Gastrocnemius medialis (tissue), 4 donors: ENCODE measurements at regions of chr17 and their contacts with region 1.

Region 1: GRCh38 chr17:47615766-47616424 is 33.8 kb upstream of the KPNB1 start:
- DNase-seq: no peak
- ATAC-seq: peak in 1 of 2 donors; percentile 52
- H3K4me3 ChIP-seq: no peak overlapping the region
- H3K27ac ChIP-seq: peak overlapping the region in 2 of 4 donors; percentile 26 to 32
- H3K4me1 ChIP-seq: peaks cover 12 to 19% of the 10 kb centered on the region in 2 donors
- H3K27me3 ChIP-seq: no peaks in the 10 kb centered on the region
- CTCF ChIP-seq: peak; percentile 73 to 79 (median 75)
- POLR2A ChIP-seq: no peak

Region 2: GRCh38 chr17:47131761-47132160 is 484.1 kb before region 1 on chr17:
- in situ Hi-C with region 1: loop called in 1 of 4 experiments (anchors 25 kb)
- intact Hi-C with region 1: no loop called
- DNase-seq: no peak
- ATAC-seq: no peak
- H3K4me3 ChIP-seq: no peak overlapping the region
- H3K27ac ChIP-seq: no peak overlapping the region
- H3K4me1 ChIP-seq: no peaks in the 10 kb centered on the region
- H3K27me3 ChIP-seq: no peaks in the 10 kb centered on the region
- CTCF ChIP-seq: no peak
- POLR2A ChIP-seq: no peak

Region 3: DNA sequence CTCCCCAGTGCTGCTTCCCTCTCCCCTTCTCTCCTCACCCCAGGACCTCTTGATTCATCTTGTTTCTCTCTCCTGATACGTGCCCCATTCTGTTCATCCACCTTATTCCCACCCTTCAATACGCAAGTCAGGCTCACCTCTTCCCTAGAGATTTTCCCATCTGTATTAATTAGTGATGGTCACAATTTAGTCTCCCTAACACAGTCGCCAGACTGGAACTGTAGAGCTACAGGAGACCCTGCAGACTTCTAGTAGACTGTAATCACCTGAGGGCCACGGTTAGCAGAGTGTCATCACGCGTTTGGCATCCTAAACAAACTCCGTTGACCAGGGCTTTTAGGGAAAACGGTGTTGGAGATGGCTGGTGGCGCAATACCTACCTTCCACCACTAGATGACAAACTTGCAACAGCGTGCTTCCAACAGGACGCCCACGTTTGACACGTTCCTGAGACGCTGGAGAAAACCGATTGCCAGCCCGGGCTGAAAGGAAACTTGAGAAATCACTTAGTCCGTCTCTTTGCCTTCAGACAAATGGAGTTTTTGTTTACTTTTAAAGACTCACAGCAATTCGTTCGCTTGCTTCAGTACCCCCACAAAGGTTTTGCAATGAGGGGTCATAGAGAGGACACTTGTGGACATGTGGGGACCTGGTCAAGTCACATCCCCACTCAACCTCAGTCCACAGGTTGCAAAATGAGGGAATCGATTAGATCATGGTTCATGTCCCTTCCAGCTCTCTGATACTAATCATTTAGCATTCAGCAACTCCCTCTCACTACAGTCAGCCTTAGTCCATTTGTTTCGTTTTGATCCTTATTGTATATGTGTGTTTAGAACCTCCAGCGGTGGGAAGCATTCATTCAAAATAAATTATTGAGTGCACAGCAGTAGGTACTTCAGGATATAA is 386.1 kb before region 1 on chr17:
- in situ Hi-C with region 1: loop called in 1 of 4 experiments (anchors 10 kb)
- intact Hi-C with region 1: no loop called
- DNase-seq: peak; percentile 71 to 77
- ATAC-seq: peak; percentile 89
- H3K4me3 ChIP-seq: peak overlapping the region; percentile 8 to 39 (median 26)
- H3K27ac ChIP-seq: peak overlapping the region in 2 of 4 donors; percentile 39 to 42
- H3K4me1 ChIP-seq: peaks cover 11 to 13% of the 10 kb centered on the region in 2 donors
- H3K27me3 ChIP-seq: no peaks in the 10 kb centered on the region
- CTCF ChIP-seq: peak; percentile 92 to 98 (median 97)
- POLR2A ChIP-seq: no peak

Region 4: DNA sequence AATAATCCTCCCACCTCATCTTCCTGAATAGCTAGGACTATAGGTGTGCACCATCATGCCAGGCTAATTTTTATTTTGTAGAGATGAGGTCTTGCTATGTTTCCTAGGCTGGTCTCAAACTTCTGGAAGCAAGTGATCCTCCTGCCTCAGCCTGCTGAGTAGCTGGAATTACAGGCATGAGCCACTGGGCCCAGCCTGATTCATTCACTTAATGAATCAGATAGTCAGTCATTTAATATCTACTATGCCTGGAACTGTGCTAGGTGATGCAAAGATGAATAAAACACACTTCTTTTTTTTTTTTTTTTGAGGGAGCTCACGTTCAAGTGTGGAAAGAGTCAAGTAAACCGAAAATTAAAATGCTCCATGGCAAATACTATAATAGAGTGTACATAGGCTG is 252.7 kb before region 1 on chr17:
- in situ Hi-C with region 1: no loop called
- intact Hi-C with region 1: loop called (anchors 5 kb)
- DNase-seq: no peak
- ATAC-seq: no peak
- H3K4me3 ChIP-seq: no peak overlapping the region
- H3K27ac ChIP-seq: no peak overlapping the region
- H3K4me1 ChIP-seq: no peaks in the 10 kb centered on the region
- H3K27me3 ChIP-seq: no peaks in the 10 kb centered on the region
- CTCF ChIP-seq: no peak
- POLR2A ChIP-seq: no peak

Region 5: DNA sequence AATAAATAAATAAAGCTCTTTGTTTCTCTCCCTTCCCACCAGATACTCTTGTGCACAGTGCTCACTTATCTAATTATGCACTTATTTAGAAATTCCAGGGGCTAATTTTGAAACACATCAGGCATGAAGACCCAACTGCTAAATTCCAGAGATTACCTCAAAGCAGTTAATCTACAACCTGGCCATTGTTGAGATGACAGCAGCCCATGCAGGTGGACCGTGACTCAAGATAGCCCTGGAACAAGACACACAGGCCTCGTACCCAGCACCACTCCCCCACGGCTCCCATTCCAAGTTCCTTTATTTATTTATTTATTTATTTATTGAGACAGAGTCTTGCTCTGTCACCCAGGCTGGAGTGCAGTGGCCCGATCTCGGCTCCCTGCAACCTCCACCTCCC is 145.1 kb before region 1 on chr17:
- in situ Hi-C with region 1: loop called in 1 of 4 experiments (anchors 25 kb)
- intact Hi-C with region 1: no loop called
- DNase-seq: no peak
- ATAC-seq: no peak
- H3K4me3 ChIP-seq: no peak overlapping the region
- H3K27ac ChIP-seq: no peak overlapping the region
- H3K4me1 ChIP-seq: no peaks in the 10 kb centered on the region
- H3K27me3 ChIP-seq: no peaks in the 10 kb centered on the region
- CTCF ChIP-seq: no peak
- POLR2A ChIP-seq: no peak

Region 6: DNA sequence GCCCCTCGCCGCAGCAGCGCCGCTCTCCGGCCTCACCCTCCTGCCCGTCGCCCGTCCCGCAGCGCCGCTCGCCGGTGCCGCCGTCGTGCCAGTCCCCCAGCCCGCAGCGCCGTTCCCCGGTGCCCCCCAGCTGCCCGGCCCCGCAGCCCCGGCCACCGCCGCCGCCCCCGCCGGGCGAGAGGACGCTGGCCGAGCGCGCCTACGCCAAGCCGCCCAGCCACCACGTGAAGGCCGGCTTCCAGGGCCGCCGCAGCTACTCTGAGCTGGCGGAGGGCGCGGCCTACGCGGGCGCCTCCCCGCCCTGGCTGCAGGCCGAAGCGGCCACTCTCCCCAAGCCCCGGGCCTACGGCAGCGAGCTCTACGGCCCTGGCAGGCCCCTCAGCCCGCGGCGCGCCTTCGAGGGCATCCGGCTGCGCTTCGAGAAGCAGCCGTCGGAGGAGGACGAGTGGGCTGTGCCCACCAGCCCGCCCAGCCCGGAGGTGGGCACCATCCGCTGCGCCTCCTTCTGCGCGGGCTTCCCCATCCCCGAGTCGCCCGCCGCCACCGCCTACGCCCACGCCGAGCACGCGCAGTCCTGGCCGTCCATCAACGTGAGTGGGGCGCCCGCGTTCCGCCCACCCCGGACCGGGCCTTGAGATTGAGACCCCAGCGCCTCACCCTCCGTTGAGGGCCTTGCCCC is 93.1 kb after region 1 on chr17:
- in situ Hi-C with region 1: no loop called
- intact Hi-C with region 1: no loop called
- DNase-seq: no peak
- ATAC-seq: no peak
- H3K4me3 ChIP-seq: no peak overlapping the region
- H3K27ac ChIP-seq: no peak overlapping the region
- H3K4me1 ChIP-seq: peaks cover 15 to 16% of the 10 kb centered on the region in 2 donors
- H3K27me3 ChIP-seq: peaks cover 0 to 13% (median 0%) of the 10 kb centered on the region in 3 donors
- CTCF ChIP-seq: no peak
- POLR2A ChIP-seq: no peak